CD4-positive, alpha-beta T cell (primary cell): ENCODE measurements at regions of chr1 and their contacts with region 1.

Region 1: DNA sequence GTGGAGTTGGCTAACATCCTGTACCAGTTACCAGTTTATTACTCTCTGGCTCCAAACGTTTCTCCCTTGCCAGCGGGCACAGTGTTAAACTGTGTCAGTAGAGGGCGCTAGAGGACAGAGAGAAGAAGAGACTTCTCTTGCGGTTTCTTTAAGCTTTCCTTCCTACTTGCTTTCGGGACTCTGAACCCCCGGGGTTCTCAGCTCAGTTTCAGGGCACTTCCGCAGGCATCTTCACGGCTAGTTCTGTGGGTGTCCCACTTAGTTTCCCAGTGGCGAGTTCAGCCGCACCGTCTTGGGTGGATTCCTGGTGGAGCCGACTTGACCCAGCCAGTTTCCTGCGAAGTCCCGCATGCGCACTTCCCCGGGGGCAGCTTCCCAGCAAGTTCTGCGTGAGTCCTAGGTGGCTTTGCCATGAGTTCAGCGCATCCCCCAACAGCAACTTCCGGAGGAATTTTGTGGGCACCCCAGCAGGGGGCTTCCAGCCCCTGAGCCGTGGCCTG is 37.9 kb upstream of the BTG2 start:
- DNase-seq: peak; percentile 67 to 93 (median 78)
- ATAC-seq: peak; percentile 46
- H3K4me3 ChIP-seq: peak overlapping the region; percentile 66
- H3K4me3 Mint-ChIP-seq: peak overlapping the region; percentile 73
- H3K27ac ChIP-seq: peak overlapping the region; percentile 58 to 69
- H3K27ac Mint-ChIP-seq: peak overlapping the region; percentile 77
- H3K4me1 ChIP-seq: peaks cover 38% of the 10 kb centered on the region
- H3K4me1 Mint-ChIP-seq: peaks cover 22% of the 10 kb centered on the region
- H3K27me3 ChIP-seq: no peaks in the 10 kb centered on the region
- H3K27me3 Mint-ChIP-seq: no peaks in the 10 kb centered on the region
- CTCF ChIP-seq: peak; percentile 94

Region 2: GRCh38 chr1:203038891-203039608 is 228.3 kb before region 1 on chr1:
- CTCF ChIA-PET with region 1: no interaction called
- POLR2A ChIA-PET with region 1: interaction called, 8 read pairs
- intact Hi-C with region 1: loop called (anchors 2 kb)
- DNase-seq: peak; percentile 39 to 80 (median 53)
- ATAC-seq: peak; percentile 94
- H3K4me3 ChIP-seq: no peak overlapping the region
- H3K4me3 Mint-ChIP-seq: no peak overlapping the region
- H3K27ac ChIP-seq: no peak overlapping the region
- H3K27ac Mint-ChIP-seq: no peak overlapping the region
- H3K4me1 ChIP-seq: no peaks in the 10 kb centered on the region
- H3K4me1 Mint-ChIP-seq: no peaks in the 10 kb centered on the region
- H3K27me3 ChIP-seq: peaks cover 4 to 6% of the 10 kb centered on the region in 2 experiments
- H3K27me3 Mint-ChIP-seq: peaks cover 6% of the 10 kb centered on the region
- CTCF ChIP-seq: peak; percentile 81

Region 3: DNA sequence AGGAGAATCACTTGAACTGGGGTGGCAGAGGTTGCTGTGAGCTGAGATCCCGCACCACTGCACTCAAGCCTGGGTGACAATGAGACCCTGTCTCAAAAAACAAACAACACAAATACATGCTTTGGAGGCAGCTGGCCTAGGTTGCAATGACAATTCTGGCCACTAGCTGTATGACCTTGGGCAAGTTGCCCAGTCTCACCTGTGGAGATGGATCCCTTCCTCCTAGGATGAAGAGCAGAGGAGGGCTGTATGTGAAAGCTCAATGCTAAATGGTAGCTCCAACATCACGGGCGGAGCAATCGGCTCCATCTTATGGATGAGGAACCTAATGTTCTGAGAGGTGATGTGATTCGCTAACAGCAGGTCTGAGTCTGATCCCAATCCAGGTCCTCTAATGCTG is 119.3 kb before region 1 on chr1:
- CTCF ChIA-PET with region 1: no interaction called
- POLR2A ChIA-PET with region 1: no interaction called
- intact Hi-C with region 1: no loop called
- DNase-seq: no peak
- ATAC-seq: no peak
- H3K4me3 ChIP-seq: no peak overlapping the region
- H3K4me3 Mint-ChIP-seq: no peak overlapping the region
- H3K27ac ChIP-seq: no peak overlapping the region
- H3K27ac Mint-ChIP-seq: no peak overlapping the region
- H3K4me1 ChIP-seq: no peaks in the 10 kb centered on the region
- H3K4me1 Mint-ChIP-seq: no peaks in the 10 kb centered on the region
- H3K27me3 ChIP-seq: peaks cover 0 to 1% of the 10 kb centered on the region in 2 experiments
- H3K27me3 Mint-ChIP-seq: no peaks in the 10 kb centered on the region
- CTCF ChIP-seq: no peak

Region 4: GRCh38 chr1:203290261-203291089 is 23.1 kb after region 1 on chr1:
- CTCF ChIA-PET with region 1: interaction called, 22 read pairs
- POLR2A ChIA-PET with region 1: interaction called, 87 read pairs
- intact Hi-C with region 1: no loop called
- DNase-seq: peak; percentile 95 to 99 (median 98)
- ATAC-seq: peak; percentile 55
- H3K4me3 ChIP-seq: peak overlapping the region; percentile 52
- H3K4me3 Mint-ChIP-seq: peak overlapping the region; percentile 88
- H3K27ac ChIP-seq: peak overlapping the region; percentile 99
- H3K27ac Mint-ChIP-seq: peak overlapping the region; percentile 100
- H3K4me1 ChIP-seq: peaks cover 63% of the 10 kb centered on the region
- H3K4me1 Mint-ChIP-seq: peaks cover 91% of the 10 kb centered on the region
- H3K27me3 ChIP-seq: no peaks in the 10 kb centered on the region
- H3K27me3 Mint-ChIP-seq: no peaks in the 10 kb centered on the region
- CTCF ChIP-seq: no peak

Region 5: GRCh38 chr1:203486618-203487370 is 219.4 kb after region 1 on chr1:
- CTCF ChIA-PET with region 1: interaction called, 116 read pairs
- POLR2A ChIA-PET with region 1: interaction called, 18 read pairs
- intact Hi-C with region 1: loop called (anchors 1 kb)
- DNase-seq: no peak
- ATAC-seq: no peak
- H3K4me3 ChIP-seq: no peak overlapping the region
- H3K4me3 Mint-ChIP-seq: peak overlapping the region; percentile 76
- H3K27ac ChIP-seq: no peak overlapping the region
- H3K27ac Mint-ChIP-seq: peak overlapping the region; percentile 33
- H3K4me1 ChIP-seq: peaks cover 17% of the 10 kb centered on the region
- H3K4me1 Mint-ChIP-seq: peaks cover 16% of the 10 kb centered on the region
- H3K27me3 ChIP-seq: no peaks in the 10 kb centered on the region
- H3K27me3 Mint-ChIP-seq: peaks cover 2% of the 10 kb centered on the region
- CTCF ChIP-seq: no peak

Region 6: DNA sequence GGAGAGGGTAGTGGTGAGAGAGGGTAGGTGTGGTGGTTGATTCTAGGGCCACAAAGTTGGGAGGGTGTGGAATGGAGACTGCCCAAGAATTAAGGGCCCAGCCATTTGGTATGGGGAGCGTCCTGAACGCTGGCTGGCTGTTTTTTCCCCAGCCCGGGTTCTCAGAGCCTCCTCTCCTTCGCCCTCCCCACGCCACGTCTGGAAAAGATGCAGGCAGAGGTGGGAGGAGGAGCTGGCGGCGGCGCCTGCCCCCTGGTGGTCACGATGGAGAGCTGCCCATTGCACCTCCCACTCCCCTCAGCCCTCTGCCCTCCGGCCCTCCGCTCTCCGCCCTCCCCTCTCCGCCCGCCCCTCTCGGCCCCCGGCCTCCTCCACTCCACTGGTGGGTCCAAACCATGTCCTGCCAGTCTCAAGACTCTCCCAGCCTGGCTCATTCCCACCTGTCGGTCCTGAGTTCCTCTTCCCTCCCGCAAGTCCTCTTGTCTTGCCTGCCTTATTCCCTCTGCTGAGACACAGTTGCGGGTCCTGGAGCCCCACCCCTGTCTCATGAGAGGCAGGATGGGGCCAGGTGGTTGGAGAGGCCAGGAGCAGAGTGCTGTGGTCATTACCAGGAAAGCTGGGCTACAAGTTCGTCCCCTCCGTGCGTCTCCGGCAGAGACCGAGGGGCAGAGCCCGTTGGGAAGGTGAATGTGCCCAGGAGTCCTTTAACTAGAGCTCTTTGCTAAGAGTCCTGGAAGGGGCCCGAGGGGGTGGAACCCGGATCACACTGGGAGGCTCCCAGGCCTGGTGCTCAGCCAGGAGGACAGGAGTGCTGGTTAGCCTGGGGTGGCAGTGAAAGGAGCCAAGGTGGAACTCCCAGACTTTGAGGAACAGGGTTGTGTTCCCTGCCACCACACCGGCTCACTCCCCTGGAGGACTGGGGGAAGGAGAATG is 861.8 kb after region 1 on chr1:
- CTCF ChIA-PET with region 1: interaction called, 4 read pairs
- POLR2A ChIA-PET with region 1: no interaction called
- intact Hi-C with region 1: loop called (anchors 2 to 10 kb)
- DNase-seq: peak; percentile 27 to 85 (median 42)
- ATAC-seq: peak; percentile 87
- H3K4me3 ChIP-seq: no peak overlapping the region
- H3K4me3 Mint-ChIP-seq: no peak overlapping the region
- H3K27ac ChIP-seq: no peak overlapping the region
- H3K27ac Mint-ChIP-seq: no peak overlapping the region
- H3K4me1 ChIP-seq: peaks cover 11% of the 10 kb centered on the region
- H3K4me1 Mint-ChIP-seq: peaks cover 9% of the 10 kb centered on the region
- H3K27me3 ChIP-seq: no peaks in the 10 kb centered on the region
- H3K27me3 Mint-ChIP-seq: no peaks in the 10 kb centered on the region
- CTCF ChIP-seq: peak; percentile 87